AG04450 (cell line): ENCODE measurements at regions of chr14 and their contacts with region 1.

Region 1: DNA sequence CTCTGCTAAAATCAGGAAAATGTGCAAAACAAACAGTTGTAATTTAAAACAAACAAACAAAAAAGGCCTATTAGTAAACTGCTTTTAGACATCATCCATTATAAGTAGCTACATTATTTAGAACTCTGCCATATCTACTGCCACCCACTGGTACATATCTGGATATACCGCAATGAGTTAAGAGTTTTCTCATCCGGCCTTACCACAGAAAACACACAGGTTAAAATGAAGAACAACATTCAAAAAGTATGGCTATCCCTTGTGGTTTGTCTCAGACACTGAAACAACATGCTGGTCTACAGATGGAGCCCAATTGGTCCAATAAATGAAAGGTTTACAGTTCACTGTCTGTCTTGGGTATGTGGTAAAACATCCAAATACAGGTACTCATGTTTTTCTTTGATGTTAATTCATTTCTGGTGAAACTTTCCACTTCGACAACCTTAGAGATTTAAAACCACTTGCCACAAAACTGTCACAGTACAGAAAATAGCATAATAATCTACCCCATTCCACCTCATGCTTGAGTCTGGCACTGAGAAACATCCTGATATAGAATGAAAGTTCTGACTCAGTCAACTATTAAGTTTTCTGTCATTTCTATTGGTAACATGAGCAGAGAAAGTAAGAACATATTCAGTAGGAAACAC is 354.3 kb downstream of the CEP128 start:
- DNase-seq: no peak
- H3K4me3 ChIP-seq: no peak overlapping the region
- H3K27ac ChIP-seq: no peak overlapping the region
- H3K27me3 ChIP-seq: no peaks in the 10 kb centered on the region
- CTCF ChIP-seq: peak; percentile 45

Region 2: DNA sequence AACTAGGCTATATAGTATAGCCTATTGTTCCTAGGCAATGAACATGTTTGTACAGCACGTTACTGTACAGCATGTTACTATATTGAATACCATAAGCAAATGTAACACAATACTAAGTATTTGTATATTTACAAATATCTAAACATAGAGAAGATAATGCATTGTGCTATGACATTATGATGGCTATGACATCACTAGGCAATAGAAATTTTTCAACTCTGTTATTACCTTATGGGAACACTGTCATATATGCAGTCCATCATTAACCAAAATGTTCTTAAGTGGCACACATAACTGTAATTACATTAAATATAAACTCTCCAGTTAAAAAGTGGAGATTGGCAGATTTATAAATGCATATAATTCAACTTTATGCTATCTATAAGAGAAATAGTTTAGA is 14.4 kb after region 1 on chr14:
- CTCF ChIA-PET with region 1: interaction called, 10 read pairs
- POLR2A ChIA-PET with region 1: no interaction called
- DNase-seq: no peak
- H3K4me3 ChIP-seq: no peak overlapping the region
- H3K27ac ChIP-seq: no peak overlapping the region
- H3K27me3 ChIP-seq: no peaks in the 10 kb centered on the region
- CTCF ChIP-seq: no peak